Right cardiac atrium (tissue), 5 donors: ENCODE measurements at regions of chr9 and their contacts with region 1.

Region 1: DNA sequence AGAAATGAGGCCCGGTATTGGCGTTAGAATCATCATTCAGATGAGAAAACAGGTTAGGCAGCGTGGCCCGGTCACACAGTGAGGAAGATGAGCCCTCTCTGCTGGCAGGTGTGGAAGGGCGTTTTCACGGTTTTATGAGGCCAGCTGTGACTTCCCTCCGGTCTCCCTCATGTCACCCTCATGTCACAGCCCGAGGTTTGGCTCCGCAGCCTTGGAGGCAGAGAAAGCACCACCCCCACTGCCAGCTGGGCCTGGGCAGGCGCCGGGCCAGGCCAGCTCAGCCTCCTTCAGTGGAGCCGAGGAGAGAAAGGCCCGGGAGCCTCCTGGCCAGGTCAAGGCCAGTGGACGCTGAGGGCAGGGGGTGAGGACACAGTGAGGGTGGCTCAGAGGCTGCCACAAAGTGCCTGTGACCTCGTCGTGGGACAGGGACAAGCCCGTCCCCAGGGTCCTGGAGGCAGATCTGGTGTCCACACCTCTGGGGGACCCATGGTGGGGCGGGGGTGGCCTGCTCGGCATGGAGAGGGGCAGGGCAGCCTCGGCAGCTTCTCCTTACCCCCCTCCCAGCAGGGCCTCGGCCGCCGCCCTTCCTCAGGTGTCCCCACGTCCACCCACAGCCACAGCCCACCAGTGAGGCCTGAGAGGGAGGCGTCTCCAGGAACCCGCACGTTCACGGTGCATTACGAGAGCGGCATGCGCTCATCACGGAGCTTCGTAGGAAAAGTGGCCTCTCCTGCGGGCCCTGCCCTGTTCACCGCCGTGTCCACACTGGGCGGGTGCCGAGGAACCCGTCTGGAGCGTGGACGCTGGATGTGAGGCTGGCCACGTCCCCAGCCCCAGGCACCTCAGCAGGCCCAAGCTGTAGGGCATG is 32.2 kb downstream of the EXD3 start:
- DNase-seq: peak in 2 of 3 donors; percentile 43
- ATAC-seq: peak; percentile 5
- H3K4me3 ChIP-seq: no peak overlapping the region
- H3K27ac ChIP-seq: peak overlapping the region; percentile 0
- H3K4me1 ChIP-seq: no peaks in the 10 kb centered on the region
- H3K27me3 ChIP-seq: no peaks in the 10 kb centered on the region

Region 2: DNA sequence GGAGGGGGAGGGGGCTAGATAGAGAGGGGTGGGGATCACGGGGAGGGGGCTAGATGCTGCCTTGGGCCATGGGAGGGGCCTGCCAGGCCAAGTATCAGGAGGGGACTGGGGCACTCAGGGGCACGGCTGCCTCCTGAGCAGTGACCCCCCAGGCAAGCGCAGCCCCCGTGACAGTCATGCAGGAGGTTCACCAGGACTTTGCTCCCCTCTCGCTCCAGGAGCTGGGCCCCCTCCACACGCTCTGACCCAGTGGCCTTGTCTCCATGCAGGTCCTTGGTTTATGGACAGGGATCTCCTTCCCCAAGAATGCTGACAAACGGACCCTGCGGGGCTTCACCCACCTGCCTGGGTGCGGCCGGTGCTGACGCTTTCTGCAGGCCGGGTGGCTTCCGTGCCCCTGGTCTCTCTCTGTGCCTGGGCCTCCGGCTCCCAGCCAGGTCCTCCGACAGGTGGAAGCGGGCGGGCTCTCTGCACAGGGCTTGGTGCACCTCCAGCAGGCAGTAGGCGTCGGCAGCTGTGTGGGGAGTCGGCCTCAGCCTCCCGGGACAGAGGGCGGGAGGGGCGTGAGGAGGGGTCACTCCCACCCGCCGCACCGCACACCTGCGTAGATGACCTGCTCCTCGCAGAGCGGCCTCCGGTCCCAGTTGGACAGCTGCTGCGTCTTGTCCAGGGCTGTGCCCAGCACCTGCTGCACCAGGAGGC is 41.9 kb before region 1 on chr9:
- intact Hi-C with region 1: loop called in 1 of 4 experiments (anchors 10 kb)
- DNase-seq: peak in 2 of 3 donors; percentile 36 to 64
- ATAC-seq: no peak
- H3K4me3 ChIP-seq: no peak overlapping the region
- H3K27ac ChIP-seq: no peak overlapping the region
- H3K4me1 ChIP-seq: no peaks in the 10 kb centered on the region
- H3K27me3 ChIP-seq: no peaks in the 10 kb centered on the region